ENCODE measurements at regions of chr16 and their contacts with region 1.

Region 1: GRCh38 chr16:11032000-11032921 is 87.9 kb downstream of the CLEC16A start:
- DNase-seq: no peak
- ATAC-seq: peak in 6 of 8 donors; percentile 10 to 47 (median 32)
- H3K4me3 ChIP-seq: no peak overlapping the region
- H3K27ac ChIP-seq: peak overlapping the region in 9 of 10 donors; percentile 21 to 66 (median 57)
- H3K4me1 ChIP-seq: peaks cover 6 to 57% (median 42%) of the 10 kb centered on the region in 9 donors
- H3K27me3 ChIP-seq: no peaks in the 10 kb centered on the region
- CTCF ChIP-seq: no peak

Region 2: GRCh38 chr16:10971560-10971961 is 60.7 kb before region 1 on chr16:
- intact Hi-C with region 1: no loop called
- DNase-seq: peak in 1 of 2 donors; percentile 70
- ATAC-seq: peak; percentile 34 to 72 (median 66)
- H3K4me3 ChIP-seq: no peak overlapping the region
- H3K27ac ChIP-seq: no peak overlapping the region
- H3K4me1 ChIP-seq: peaks cover 0 to 31% (median 15%) of the 10 kb centered on the region in 9 donors
- H3K27me3 ChIP-seq: no peaks in the 10 kb centered on the region
- CTCF ChIP-seq: peak; percentile 72 to 87 (median 81)

Region 3: GRCh38 chr16:11016993-11017392 is 15.3 kb before region 1 on chr16:
- intact Hi-C with region 1: loop called in 1 of 10 experiments (anchors 2 kb)
- DNase-seq: peak in 1 of 2 donors; percentile 69
- ATAC-seq: peak in 4 of 8 donors; percentile 48 to 77 (median 62)
- H3K4me3 ChIP-seq: no peak overlapping the region
- H3K27ac ChIP-seq: no peak overlapping the region
- H3K4me1 ChIP-seq: peaks cover 0 to 18% (median 10%) of the 10 kb centered on the region in 9 donors
- H3K27me3 ChIP-seq: no peaks in the 10 kb centered on the region
- CTCF ChIP-seq: no peak

Region 4: GRCh38 chr16:11308493-11309283 is 276.4 kb after region 1 on chr16:
- intact Hi-C with region 1: no loop called
- DNase-seq: no peak
- ATAC-seq: peak in 1 of 8 donors; percentile 25
- H3K4me3 ChIP-seq: no peak overlapping the region
- H3K27ac ChIP-seq: no peak overlapping the region
- H3K4me1 ChIP-seq: peaks cover 0 to 55% (median 4%) of the 10 kb centered on the region in 9 donors
- H3K27me3 ChIP-seq: no peaks in the 10 kb centered on the region
- CTCF ChIP-seq: no peak

Measured in heart right ventricle (tissue), 16 donors.